CD4-positive, alpha-beta memory T cell (primary cell): ENCODE measurements at regions of chr7 and their contacts with region 1.

Region 1: GRCh38 chr7:73667344-73668102 is at the start of gene VPS37D:
- DNase-seq: peak; percentile 87 to 96 (median 91)
- H3K4me3 ChIP-seq: peak within 1 kb of the TSS in 1 of 2 donors; percentile 44
- H3K4me3 Mint-ChIP-seq: peak within 1 kb of the TSS; percentile 70 to 81 (median 76)
- H3K27ac ChIP-seq: no peak within 1 kb of the TSS
- H3K27ac Mint-ChIP-seq: peak within 1 kb of the TSS in 6 of 7 donors; percentile 48 to 70 (median 54)
- H3K4me1 ChIP-seq: peaks cover 10% of the 10 kb centered on the region
- H3K4me1 Mint-ChIP-seq: peaks cover 4 to 12% (median 7%) of the 10 kb centered on the region in 4 donors
- H3K27me3 ChIP-seq: peaks cover 13% of the 10 kb centered on the region
- H3K27me3 Mint-ChIP-seq: peaks cover 19 to 31% of the 10 kb centered on the region in 2 donors
- total RNA-seq, gene VPS37D: not detected

Region 2: DNA sequence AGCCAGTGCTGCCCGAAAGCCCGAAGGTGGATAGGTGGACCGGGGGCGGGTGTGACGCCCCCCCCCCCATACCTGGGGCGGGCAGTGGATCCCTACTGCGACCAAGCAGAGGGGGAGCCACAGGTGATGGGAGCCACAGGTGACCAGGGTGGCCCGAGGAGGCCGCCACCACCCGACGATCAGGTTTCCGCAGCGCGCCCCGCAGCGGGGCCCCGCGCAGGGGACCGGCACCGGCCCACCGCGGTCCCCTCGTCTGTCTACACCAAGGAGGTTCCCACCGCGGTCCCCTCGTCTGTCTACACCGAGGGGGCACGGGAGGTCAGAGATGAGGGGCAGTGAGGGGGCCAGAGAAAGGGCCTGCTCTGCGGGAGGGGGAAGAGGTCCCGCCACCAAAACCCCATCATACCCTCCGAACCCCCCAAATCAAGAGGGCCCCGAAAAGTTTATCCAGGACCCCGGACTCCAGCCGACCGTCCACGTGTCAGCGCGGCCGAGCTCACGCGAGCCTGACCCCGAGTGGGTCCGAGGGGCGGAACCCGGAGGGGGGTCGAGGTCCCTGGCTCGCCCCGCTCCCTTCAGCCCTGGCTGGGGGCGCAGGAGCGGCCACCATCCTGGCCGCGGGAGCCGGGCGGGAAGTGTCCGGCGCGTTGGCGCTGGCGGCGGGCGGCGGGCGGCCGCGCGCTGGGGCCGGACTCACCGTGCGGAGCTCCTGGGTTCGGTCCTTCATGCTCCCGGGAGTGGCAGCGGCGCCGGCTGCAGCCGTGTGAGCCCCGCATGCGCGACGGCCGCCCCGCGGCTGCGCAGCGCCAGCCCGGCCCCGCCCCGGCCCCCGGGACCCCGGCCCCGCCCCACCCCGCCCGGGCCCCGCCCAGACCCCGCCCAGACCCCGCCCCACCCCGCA is 51.6 kb after region 1 on chr7 and contains the start of gene STX1A:
- CTCF ChIA-PET with region 1: no interaction called
- POLR2A ChIA-PET with region 1: no interaction called
- intact Hi-C with region 1: loop called (anchors 5 kb)
- DNase-seq: peak; percentile 65 to 78 (median 71)
- H3K4me3 ChIP-seq: peak within 1 kb of the TSS; percentile 65 to 76
- H3K4me3 Mint-ChIP-seq: peak within 1 kb of the TSS; percentile 84 to 92 (median 91)
- H3K27ac ChIP-seq: peak within 1 kb of the TSS; percentile 46
- H3K27ac Mint-ChIP-seq: peak within 1 kb of the TSS in 5 of 7 donors; percentile 68 to 90 (median 72)
- H3K4me1 ChIP-seq: peaks cover 34% of the 10 kb centered on the region
- H3K4me1 Mint-ChIP-seq: peaks cover 13 to 29% (median 20%) of the 10 kb centered on the region in 4 donors
- H3K27me3 ChIP-seq: no peaks in the 10 kb centered on the region
- H3K27me3 Mint-ChIP-seq: no peaks in the 10 kb centered on the region
- total RNA-seq, gene STX1A: 7.5 to 8.3 TPM

Region 3: GRCh38 chr7:74061840-74062539 is 394.5 kb after region 1 on chr7:
- CTCF ChIA-PET with region 1: no interaction called
- POLR2A ChIA-PET with region 1: no interaction called
- intact Hi-C with region 1: no loop called
- DNase-seq: peak; percentile 76 to 85 (median 83)
- H3K4me3 ChIP-seq: no peak overlapping the region
- H3K4me3 Mint-ChIP-seq: peak overlapping the region; percentile 46 to 78 (median 60)
- H3K27ac ChIP-seq: peak overlapping the region; percentile 46
- H3K27ac Mint-ChIP-seq: peak overlapping the region; percentile 92 to 99 (median 97)
- H3K4me1 ChIP-seq: peaks cover 10% of the 10 kb centered on the region
- H3K4me1 Mint-ChIP-seq: peaks cover 5 to 7% (median 6%) of the 10 kb centered on the region in 4 donors
- H3K27me3 ChIP-seq: no peaks in the 10 kb centered on the region
- H3K27me3 Mint-ChIP-seq: peaks cover 4 to 11% of the 10 kb centered on the region in 2 donors